Psoas muscle (tissue), 8 donors: ENCODE measurements at regions of chr1 and their contacts with region 1.

Region 1: GRCh38 chr1:220776720-220777326 is 9.9 kb upstream of the MTARC1 start:
- DNase-seq: peak; percentile 80 to 91
- ATAC-seq: peak; percentile 87 to 99 (median 96)
- H3K4me3 ChIP-seq: no peak overlapping the region
- H3K27ac ChIP-seq: no peak overlapping the region
- H3K4me1 ChIP-seq: peaks cover 3% of the 10 kb centered on the region
- H3K27me3 ChIP-seq: no peaks in the 10 kb centered on the region
- CTCF ChIP-seq: peak; percentile 94

Region 2: GRCh38 chr1:220272047-220272840 is 504.6 kb before region 1 on chr1 and contains the start of gene RAB3GAP2:
- intact Hi-C with region 1: loop called in 1 of 2 experiments (anchors 10 kb)
- DNase-seq: peak; percentile 95 to 97
- ATAC-seq: peak; percentile 96 to 98 (median 98)
- H3K4me3 ChIP-seq: peak within 1 kb of the TSS; percentile 87
- H3K27ac ChIP-seq: peak within 1 kb of the TSS; percentile 85
- H3K4me1 ChIP-seq: peaks cover 29% of the 10 kb centered on the region
- H3K27me3 ChIP-seq: no peaks in the 10 kb centered on the region
- CTCF ChIP-seq: no peak
- total RNA-seq, gene RAB3GAP2: 17.0 to 28.6 (median 27.5) TPM

Region 3: DNA sequence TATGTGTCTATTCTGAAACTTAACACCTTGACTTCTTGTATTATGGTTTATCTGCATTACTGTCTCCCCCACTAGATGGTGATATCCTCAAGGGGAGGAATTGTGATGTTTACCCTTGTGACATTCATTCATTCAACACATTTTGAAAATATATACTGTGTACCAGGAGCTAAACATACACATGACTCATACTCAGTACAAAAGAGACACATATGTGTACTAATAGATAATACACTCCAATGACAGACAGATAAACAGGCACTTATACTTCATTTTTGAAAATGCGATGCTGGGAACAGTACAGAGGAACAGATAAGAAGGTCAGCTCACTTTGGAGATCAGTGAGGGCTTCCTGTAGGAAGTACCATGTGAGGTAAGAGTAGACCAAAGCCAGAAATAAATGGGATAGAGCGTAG is 495.7 kb before region 1 on chr1:
- intact Hi-C with region 1: loop called (anchors 10 kb)
- DNase-seq: no peak
- ATAC-seq: peak in 2 of 4 donors; percentile 25 to 39
- H3K4me3 ChIP-seq: no peak overlapping the region
- H3K27ac ChIP-seq: no peak overlapping the region
- H3K4me1 ChIP-seq: no peaks in the 10 kb centered on the region
- H3K27me3 ChIP-seq: peaks cover 0 to 16% (median 0%) of the 10 kb centered on the region in 3 donors
- CTCF ChIP-seq: peak; percentile 50

Region 4: GRCh38 chr1:220294846-220295301 is 481.9 kb before region 1 on chr1:
- intact Hi-C with region 1: loop called in 1 of 2 experiments (anchors 5 kb)
- DNase-seq: no peak
- ATAC-seq: no peak
- H3K4me3 ChIP-seq: no peak overlapping the region
- H3K27ac ChIP-seq: no peak overlapping the region
- H3K4me1 ChIP-seq: no peaks in the 10 kb centered on the region
- H3K27me3 ChIP-seq: no peaks in the 10 kb centered on the region
- CTCF ChIP-seq: no peak

Region 5: GRCh38 chr1:220430059-220430458 is 346.8 kb before region 1 on chr1:
- intact Hi-C with region 1: no loop called
- DNase-seq: no peak
- ATAC-seq: no peak
- H3K4me3 ChIP-seq: no peak overlapping the region
- H3K27ac ChIP-seq: no peak overlapping the region
- H3K4me1 ChIP-seq: no peaks in the 10 kb centered on the region
- H3K27me3 ChIP-seq: no peaks in the 10 kb centered on the region
- CTCF ChIP-seq: no peak

Region 6: GRCh38 chr1:220680085-220680687 is 96.6 kb before region 1 on chr1:
- intact Hi-C with region 1: loop called (anchors 1 to 5 kb)
- DNase-seq: no peak
- ATAC-seq: peak; percentile 64 to 84 (median 74)
- H3K4me3 ChIP-seq: no peak overlapping the region
- H3K27ac ChIP-seq: no peak overlapping the region
- H3K4me1 ChIP-seq: no peaks in the 10 kb centered on the region
- H3K27me3 ChIP-seq: no peaks in the 10 kb centered on the region
- CTCF ChIP-seq: peak; percentile 76

Region 7: GRCh38 chr1:221408117-221408803 is 631.4 kb after region 1 on chr1:
- intact Hi-C with region 1: no loop called
- DNase-seq: no peak
- ATAC-seq: no peak
- H3K4me3 ChIP-seq: no peak overlapping the region
- H3K27ac ChIP-seq: no peak overlapping the region
- H3K4me1 ChIP-seq: no peaks in the 10 kb centered on the region
- H3K27me3 ChIP-seq: no peaks in the 10 kb centered on the region
- CTCF ChIP-seq: no peak